Common myeloid progenitor, CD34-positive (primary cell): ENCODE measurements at regions of chr15 and their contacts with region 1.

Region 1: DNA sequence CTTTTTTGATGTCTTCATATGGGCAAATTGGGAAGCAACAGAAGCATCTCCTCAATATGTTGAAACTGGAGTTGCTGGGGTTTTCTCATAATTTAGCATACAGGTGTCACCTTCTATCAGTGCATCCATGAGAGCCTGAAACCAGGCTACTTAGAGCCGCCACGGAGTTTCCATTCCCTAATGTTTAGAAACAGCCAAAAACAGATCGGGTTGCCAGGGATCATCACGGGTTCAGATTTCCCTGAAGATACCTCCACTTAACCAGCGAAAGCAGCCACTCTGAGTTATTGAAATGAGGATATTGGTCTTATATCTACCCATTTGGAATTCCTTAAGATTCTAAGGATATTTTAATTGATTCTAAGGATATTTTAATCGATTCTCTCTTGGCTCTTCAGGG is 14.5 kb downstream of the TERB2 start:
- DNase-seq: no peak
- H3K4me3 ChIP-seq: no peak overlapping the region
- H3K27ac ChIP-seq: no peak overlapping the region
- H3K4me1 ChIP-seq: peaks cover 0 to 2% (median 1%) of the 10 kb centered on the region in 4 experiments
- H3K27me3 ChIP-seq: no peaks in the 10 kb centered on the region

Region 2: DNA sequence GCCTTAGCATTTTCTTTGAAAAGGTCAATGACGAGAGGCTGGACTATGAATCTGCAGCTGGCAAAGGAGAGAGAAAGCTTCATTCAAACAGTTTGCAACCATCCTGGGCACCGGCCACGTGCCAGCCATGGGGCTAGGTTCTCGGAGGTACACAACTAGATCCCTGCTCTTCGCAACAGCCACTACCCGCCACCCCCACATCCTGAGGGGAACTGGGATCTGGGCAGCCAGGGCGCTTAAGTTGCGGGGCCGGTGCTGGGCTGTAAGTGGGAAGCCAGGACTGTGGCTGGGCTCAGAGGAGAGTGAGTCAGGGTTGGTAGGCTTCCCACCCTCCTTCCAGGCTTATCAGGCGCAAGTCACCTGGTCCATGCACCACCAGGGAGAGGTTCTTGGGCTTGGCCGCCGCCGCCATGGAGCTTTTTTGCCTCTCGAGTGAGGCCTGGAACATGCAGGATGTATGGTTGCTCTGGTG is 109.6 kb before region 1 on chr15:
- CTCF ChIA-PET with region 1: no interaction called
- POLR2A ChIA-PET with region 1: no interaction called
- DNase-seq: no peak
- H3K4me3 ChIP-seq: no peak overlapping the region
- H3K27ac ChIP-seq: no peak overlapping the region
- H3K4me1 ChIP-seq: no peaks in the 10 kb centered on the region
- H3K27me3 ChIP-seq: no peaks in the 10 kb centered on the region

Region 3: GRCh38 chr15:44910981-44911625 is 59.9 kb before region 1 on chr15:
- CTCF ChIA-PET with region 1: no interaction called
- POLR2A ChIA-PET with region 1: no interaction called
- DNase-seq: peak in 1 of 3 donors; percentile 9
- H3K4me3 ChIP-seq: no peak overlapping the region
- H3K27ac ChIP-seq: no peak overlapping the region
- H3K4me1 ChIP-seq: no peaks in the 10 kb centered on the region
- H3K27me3 ChIP-seq: no peaks in the 10 kb centered on the region

Region 4: DNA sequence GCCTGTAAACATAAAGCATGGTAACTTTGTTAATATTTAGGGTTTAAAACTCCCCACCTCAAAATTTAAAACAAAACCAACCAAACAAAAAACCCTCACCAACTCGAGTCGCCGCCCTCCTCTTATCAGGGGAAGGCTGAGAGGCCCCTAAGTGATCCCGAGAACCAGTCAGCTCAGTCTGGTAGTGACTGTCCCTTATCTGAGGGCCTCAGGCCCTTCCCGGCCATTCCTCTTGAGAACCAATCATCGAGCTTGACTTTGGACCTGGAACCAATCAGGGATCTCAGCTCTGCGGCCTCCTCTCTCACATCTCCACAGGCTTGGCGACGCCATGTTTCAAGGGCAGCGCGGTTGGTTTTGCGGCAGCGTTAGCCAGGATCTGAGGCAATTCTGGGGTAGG is 14.6 kb before region 1 on chr15 and contains the start of gene TERB2:
- CTCF ChIA-PET with region 1: no interaction called
- POLR2A ChIA-PET with region 1: no interaction called
- DNase-seq: no peak
- H3K4me3 ChIP-seq: no peak within 1 kb of the TSS
- H3K27ac ChIP-seq: no peak within 1 kb of the TSS
- H3K4me1 ChIP-seq: no peaks in the 10 kb centered on the region
- H3K27me3 ChIP-seq: no peaks in the 10 kb centered on the region

Region 5: GRCh38 chr15:45009046-45009445 is 38.0 kb after region 1 on chr15:
- CTCF ChIA-PET with region 1: no interaction called
- POLR2A ChIA-PET with region 1: no interaction called
- DNase-seq: no peak
- H3K4me3 ChIP-seq: no peak overlapping the region
- H3K27ac ChIP-seq: no peak overlapping the region
- H3K4me1 ChIP-seq: no peaks in the 10 kb centered on the region
- H3K27me3 ChIP-seq: no peaks in the 10 kb centered on the region

Region 6: DNA sequence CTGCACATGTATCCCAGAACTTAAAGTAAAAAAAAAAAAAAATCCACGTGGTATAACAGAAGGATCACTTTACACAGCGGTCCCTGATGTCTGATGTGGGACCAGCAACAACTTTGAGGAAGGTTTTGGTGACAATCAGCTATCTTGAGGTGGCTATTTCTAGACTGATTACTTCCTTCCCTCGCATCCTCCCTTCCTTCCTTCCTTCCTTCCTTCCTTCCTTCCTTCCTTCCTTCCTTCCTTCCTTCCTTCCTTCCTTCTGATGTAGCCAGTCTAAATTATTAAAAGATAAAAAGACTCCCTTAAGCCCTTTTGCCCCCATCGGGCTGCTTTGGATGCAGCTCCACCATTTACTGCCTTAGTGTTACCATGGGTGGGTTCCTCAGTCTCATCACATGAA is 66.9 kb after region 1 on chr15:
- CTCF ChIA-PET with region 1: interaction called, 50 read pairs
- POLR2A ChIA-PET with region 1: no interaction called
- DNase-seq: no peak
- H3K4me3 ChIP-seq: no peak overlapping the region
- H3K27ac ChIP-seq: no peak overlapping the region
- H3K4me1 ChIP-seq: peaks cover 0 to 4% (median 2%) of the 10 kb centered on the region in 4 experiments
- H3K27me3 ChIP-seq: no peaks in the 10 kb centered on the region

Region 7: DNA sequence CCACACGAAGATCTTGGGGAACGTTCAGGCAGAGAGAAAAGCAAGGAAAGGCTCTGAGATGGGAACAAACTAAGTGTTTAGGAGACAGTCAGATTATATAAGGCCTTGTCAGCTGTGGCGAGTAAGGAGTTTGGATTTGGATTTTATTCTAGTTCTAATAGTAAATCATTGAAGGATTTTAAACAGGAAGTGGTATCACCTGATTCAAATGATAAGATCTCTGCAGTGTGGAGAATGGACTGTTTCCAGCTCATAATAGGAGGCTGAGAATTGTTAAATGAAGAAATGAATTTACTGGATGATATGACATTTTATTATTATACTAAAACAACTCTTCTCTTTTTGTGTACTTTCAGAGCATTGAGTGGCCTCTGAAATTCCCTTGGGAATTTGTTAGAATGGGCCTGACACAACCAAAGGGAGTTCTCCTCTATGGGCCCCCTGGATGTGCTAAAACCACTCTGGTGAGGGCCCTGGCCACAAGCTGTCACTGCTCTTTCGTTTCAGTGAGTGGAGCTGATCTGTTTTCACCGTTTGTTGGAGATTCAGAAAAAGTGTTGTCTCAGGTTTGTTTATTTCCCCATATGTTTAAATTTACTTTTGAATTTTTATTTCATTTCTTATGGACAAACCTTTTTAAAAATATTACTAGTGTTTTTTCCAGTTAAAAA is 443.3 kb after region 1 on chr15:
- CTCF ChIA-PET with region 1: no interaction called
- POLR2A ChIA-PET with region 1: interaction called, 11 read pairs
- DNase-seq: peak in 2 of 3 donors; percentile 22 to 37
- H3K4me3 ChIP-seq: no peak overlapping the region
- H3K27ac ChIP-seq: no peak overlapping the region
- H3K4me1 ChIP-seq: peaks cover 0 to 13% (median 8%) of the 10 kb centered on the region in 4 experiments
- H3K27me3 ChIP-seq: no peaks in the 10 kb centered on the region